CD4-positive, alpha-beta memory T cell (primary cell): ENCODE measurements at regions of chr16 and their contacts with region 1.

Region 1: DNA sequence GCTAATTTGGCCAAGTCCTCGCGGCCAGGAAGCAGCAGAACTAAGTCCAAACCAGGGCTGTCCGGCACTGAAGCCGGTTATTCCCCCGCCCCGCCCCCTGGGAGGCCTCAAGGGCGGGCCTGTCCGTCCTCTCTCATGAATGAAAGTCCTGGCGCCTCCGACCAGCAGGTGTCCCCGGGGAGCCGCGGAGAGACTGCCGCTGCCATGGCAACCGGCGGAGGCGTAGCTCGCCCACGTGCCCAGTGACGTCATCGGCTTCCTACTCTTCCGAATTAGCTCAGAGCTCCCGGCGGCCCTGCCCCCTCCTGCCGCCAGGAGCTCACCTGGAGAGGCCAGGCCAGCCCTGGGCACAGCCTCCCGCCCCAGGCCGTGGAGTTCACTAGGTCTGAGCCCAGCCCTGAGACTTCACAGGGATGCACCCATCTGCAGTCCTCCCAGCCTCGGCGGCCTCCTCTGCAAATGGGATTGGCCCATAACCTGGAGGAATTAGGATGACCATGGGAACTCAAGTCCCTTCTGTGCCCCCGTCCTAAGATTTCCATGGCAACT is 1.3 kb downstream of the SPATA2L start:
- DNase-seq: peak; percentile 92 to 97 (median 93)
- H3K4me3 ChIP-seq: peak overlapping the region; percentile 34 to 64
- H3K4me3 Mint-ChIP-seq: peak overlapping the region; percentile 51 to 87 (median 70)
- H3K27ac ChIP-seq: peak overlapping the region; percentile 80
- H3K27ac Mint-ChIP-seq: peak overlapping the region; percentile 83 to 94 (median 92)
- H3K4me1 ChIP-seq: peaks cover 34% of the 10 kb centered on the region
- H3K4me1 Mint-ChIP-seq: peaks cover 8 to 42% (median 16%) of the 10 kb centered on the region in 4 donors
- H3K27me3 ChIP-seq: no peaks in the 10 kb centered on the region
- H3K27me3 Mint-ChIP-seq: no peaks in the 10 kb centered on the region

Region 2: GRCh38 chr16:89269805-89270665 is 430.1 kb before region 1 on chr16:
- CTCF ChIA-PET with region 1: no interaction called
- POLR2A ChIA-PET with region 1: no interaction called
- intact Hi-C with region 1: no loop called
- DNase-seq: no peak
- H3K4me3 ChIP-seq: no peak overlapping the region
- H3K4me3 Mint-ChIP-seq: no peak overlapping the region
- H3K27ac ChIP-seq: no peak overlapping the region
- H3K27ac Mint-ChIP-seq: peak overlapping the region in 1 of 7 donors; percentile 38
- H3K4me1 ChIP-seq: no peaks in the 10 kb centered on the region
- H3K4me1 Mint-ChIP-seq: peaks cover 0 to 4% (median 0%) of the 10 kb centered on the region in 4 donors
- H3K27me3 ChIP-seq: no peaks in the 10 kb centered on the region
- H3K27me3 Mint-ChIP-seq: no peaks in the 10 kb centered on the region

Region 3: DNA sequence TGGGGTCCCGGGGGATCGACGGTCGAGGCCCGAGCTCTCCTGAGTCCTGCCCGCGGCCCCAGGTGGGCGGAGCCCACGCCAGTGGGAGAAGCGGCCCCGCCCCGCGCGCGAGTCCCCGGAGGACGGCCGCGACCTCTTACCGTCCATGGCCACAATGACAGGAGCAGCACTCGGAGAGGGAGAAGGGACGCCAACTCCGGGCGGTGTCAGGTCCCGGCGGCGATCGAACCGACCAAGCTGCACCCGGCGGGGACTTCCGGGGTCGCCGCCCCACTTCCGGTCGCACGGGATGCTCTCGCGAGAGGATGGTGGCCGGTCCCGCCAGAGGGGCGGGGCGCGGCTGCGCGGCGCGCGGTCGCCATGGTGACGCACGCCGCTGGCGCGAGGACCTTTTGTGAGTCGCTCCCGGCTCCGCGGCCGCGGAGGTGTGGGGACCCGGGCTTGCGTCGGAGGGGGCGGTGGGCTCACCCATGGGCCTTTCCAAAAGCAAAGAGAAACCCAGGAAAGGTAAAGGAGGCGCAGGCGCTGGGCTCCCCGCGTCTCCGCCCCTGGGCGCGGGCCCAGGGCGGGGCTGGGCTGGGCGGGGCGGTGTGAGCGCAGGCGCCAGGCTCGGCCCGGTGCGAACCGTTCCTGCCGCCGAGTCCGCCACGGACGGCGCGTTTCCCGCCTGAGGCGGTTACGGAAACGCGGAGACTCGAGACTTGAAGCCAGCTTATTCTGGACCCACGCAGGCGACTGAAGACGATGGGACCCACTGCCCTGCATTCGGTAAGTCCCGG is 42.5 kb before region 1 on chr16 and contains the starts of genes CHMP1A and SPATA33:
- CTCF ChIA-PET with region 1: interaction called, 10 read pairs
- POLR2A ChIA-PET with region 1: interaction called, 11 read pairs
- intact Hi-C with region 1: loop called (anchors 1 kb)
- DNase-seq: peak; percentile 90 to 97 (median 94)
- H3K4me3 ChIP-seq: peak within 1 kb of the TSS; percentile 30 to 92
- H3K4me3 Mint-ChIP-seq: peak within 1 kb of the TSS; percentile 85 to 91 (median 88)
- H3K27ac ChIP-seq: peak within 1 kb of the TSS; percentile 93
- H3K27ac Mint-ChIP-seq: peak within 1 kb of the TSS; percentile 85 to 92 (median 91)
- H3K4me1 ChIP-seq: peaks cover 21% of the 10 kb centered on the region
- H3K4me1 Mint-ChIP-seq: peaks cover 13 to 46% (median 26%) of the 10 kb centered on the region in 4 donors
- H3K27me3 ChIP-seq: no peaks in the 10 kb centered on the region
- H3K27me3 Mint-ChIP-seq: no peaks in the 10 kb centered on the region
- total RNA-seq, gene CHMP1A: 77.3 to 88.9 TPM
- total RNA-seq, gene SPATA33: 8.6 to 10.5 TPM

Region 4: DNA sequence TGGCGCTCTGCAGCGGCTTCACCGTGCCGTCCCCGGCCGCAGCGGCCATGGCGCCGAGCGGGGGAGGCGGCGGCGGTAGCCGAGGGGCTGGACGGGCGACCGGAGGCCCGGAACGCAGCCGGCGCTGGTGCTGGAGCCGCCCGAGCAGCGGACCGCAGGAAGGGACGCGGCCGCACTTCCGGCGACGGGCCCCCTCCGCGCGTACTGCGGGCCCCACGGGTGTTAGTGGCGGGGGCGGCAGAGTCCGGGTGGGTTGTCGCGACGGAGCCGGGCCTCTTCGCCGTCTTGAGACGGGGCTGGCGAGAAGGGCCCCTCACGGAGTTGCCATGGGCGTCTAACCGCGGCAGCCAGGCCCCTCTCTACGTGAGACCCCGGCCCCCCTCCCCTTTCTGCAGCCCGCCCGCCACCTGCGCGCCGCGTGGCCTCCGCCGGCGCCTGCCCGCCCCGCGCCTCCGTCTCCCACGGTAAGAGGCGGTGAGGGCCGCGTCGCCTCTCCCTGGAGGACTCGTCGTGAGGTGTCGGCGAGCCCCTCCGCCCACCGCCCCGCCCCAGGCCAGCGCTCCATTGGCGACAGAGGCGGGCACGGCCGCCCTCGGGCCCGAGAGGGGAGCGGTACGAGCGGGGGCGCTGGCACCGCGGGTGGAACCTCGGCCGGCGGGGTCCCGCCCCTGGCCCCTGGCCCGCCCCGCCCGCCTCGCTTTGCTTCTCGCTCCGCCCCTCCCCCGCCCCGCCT is 20.8 kb after region 1 on chr16 and contains the starts of genes VPS9D1 and ZNF276:
- CTCF ChIA-PET with region 1: interaction called, 25 read pairs
- POLR2A ChIA-PET with region 1: interaction called, 59 read pairs
- intact Hi-C with region 1: loop called (anchors 1 kb)
- DNase-seq: peak; percentile 81 to 84 (median 81)
- H3K4me3 ChIP-seq: peak within 1 kb of the TSS; percentile 78 to 96
- H3K4me3 Mint-ChIP-seq: peak within 1 kb of the TSS; percentile 92 to 99 (median 99)
- H3K27ac ChIP-seq: peak within 1 kb of the TSS; percentile 89
- H3K27ac Mint-ChIP-seq: peak within 1 kb of the TSS; percentile 97 to 100 (median 99)
- H3K4me1 ChIP-seq: peaks cover 48% of the 10 kb centered on the region
- H3K4me1 Mint-ChIP-seq: peaks cover 13 to 35% (median 25%) of the 10 kb centered on the region in 4 donors
- H3K27me3 ChIP-seq: no peaks in the 10 kb centered on the region
- H3K27me3 Mint-ChIP-seq: no peaks in the 10 kb centered on the region
- total RNA-seq, gene VPS9D1: 13.0 to 13.6 TPM
- total RNA-seq, gene ZNF276: 141 to 143 TPM

Region 5: GRCh38 chr16:89785523-89786155 is 85.5 kb after region 1 on chr16:
- CTCF ChIA-PET with region 1: interaction called, 293 read pairs
- POLR2A ChIA-PET with region 1: interaction called, 5 read pairs
- intact Hi-C with region 1: no loop called
- DNase-seq: peak; percentile 68 to 83 (median 71)
- H3K4me3 ChIP-seq: no peak overlapping the region
- H3K4me3 Mint-ChIP-seq: peak overlapping the region in 7 of 8 donors; percentile 13 to 82 (median 67)
- H3K27ac ChIP-seq: no peak overlapping the region
- H3K27ac Mint-ChIP-seq: peak overlapping the region; percentile 43 to 95 (median 77)
- H3K4me1 ChIP-seq: peaks cover 33% of the 10 kb centered on the region
- H3K4me1 Mint-ChIP-seq: peaks cover 24 to 42% (median 29%) of the 10 kb centered on the region in 4 donors
- H3K27me3 ChIP-seq: no peaks in the 10 kb centered on the region
- H3K27me3 Mint-ChIP-seq: no peaks in the 10 kb centered on the region

Region 6: GRCh38 chr16:89860747-89861304 is 160.7 kb after region 1 on chr16:
- CTCF ChIA-PET with region 1: interaction called, 138 read pairs
- POLR2A ChIA-PET with region 1: interaction called, 21 read pairs
- intact Hi-C with region 1: loop called (anchors 1 kb)
- DNase-seq: peak; percentile 71 to 80 (median 74)
- H3K4me3 ChIP-seq: no peak overlapping the region
- H3K4me3 Mint-ChIP-seq: peak overlapping the region in 2 of 8 donors; percentile 30 to 39
- H3K27ac ChIP-seq: no peak overlapping the region
- H3K27ac Mint-ChIP-seq: peak overlapping the region in 5 of 7 donors; percentile 44 to 85 (median 80)
- H3K4me1 ChIP-seq: peaks cover 41% of the 10 kb centered on the region
- H3K4me1 Mint-ChIP-seq: peaks cover 27 to 42% (median 34%) of the 10 kb centered on the region in 4 donors
- H3K27me3 ChIP-seq: no peaks in the 10 kb centered on the region
- H3K27me3 Mint-ChIP-seq: no peaks in the 10 kb centered on the region

Region 7: GRCh38 chr16:89898201-89898967 is 198.2 kb after region 1 on chr16:
- CTCF ChIA-PET with region 1: no interaction called
- POLR2A ChIA-PET with region 1: no interaction called
- intact Hi-C with region 1: no loop called
- DNase-seq: no peak
- H3K4me3 ChIP-seq: no peak overlapping the region
- H3K4me3 Mint-ChIP-seq: no peak overlapping the region
- H3K27ac ChIP-seq: no peak overlapping the region
- H3K27ac Mint-ChIP-seq: peak overlapping the region in 3 of 7 donors; percentile 18 to 69 (median 29)
- H3K4me1 ChIP-seq: no peaks in the 10 kb centered on the region
- H3K4me1 Mint-ChIP-seq: no peaks in the 10 kb centered on the region
- H3K27me3 ChIP-seq: no peaks in the 10 kb centered on the region
- H3K27me3 Mint-ChIP-seq: no peaks in the 10 kb centered on the region

Region 8: DNA sequence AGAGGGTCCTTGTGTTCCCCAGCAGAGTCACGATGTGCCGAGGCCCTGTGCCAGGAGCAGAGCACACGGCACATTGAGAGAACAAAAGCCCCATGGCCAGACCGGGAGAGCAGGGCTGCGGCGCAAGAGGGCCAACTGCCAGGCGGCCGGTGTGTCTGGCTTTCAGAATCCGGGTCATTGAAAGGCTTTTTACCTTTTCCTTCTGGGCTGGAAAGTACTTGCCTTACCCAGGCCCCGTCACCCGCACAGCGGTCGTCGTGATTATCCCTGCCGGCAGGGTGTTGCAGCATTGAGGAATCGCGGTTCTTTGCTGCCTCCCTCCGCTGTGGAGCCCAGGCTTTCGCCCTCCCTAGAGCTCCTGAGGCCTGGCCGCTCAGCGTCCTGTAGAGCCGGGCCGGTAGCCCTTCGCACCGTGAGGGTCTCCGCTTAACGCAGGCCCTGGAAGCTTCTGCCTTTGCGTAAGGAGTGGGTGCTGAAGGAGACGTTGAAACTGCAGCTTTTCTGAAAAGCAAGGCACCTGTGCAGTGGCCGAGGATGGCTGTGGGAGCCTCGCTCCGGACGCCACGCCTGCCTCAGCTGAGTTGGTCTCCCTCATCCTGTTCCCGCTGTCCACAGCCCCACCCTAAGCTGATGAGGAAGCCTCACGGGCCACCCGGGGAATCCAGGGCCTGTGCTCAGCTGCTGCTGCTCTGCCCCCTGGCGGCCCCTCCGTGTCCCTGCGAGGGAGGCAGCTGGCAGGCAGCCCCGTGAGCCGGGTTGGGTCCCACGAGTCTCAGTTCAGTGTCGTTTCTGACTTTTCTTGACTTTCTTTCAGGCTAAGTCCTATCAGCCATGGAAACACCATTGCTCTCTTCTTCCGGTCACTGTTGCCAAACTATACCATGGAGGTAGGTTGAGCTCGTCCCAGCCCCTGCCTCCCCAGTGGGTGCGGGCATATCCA is 209.9 kb after region 1 on chr16:
- CTCF ChIA-PET with region 1: interaction called, 33 read pairs
- POLR2A ChIA-PET with region 1: interaction called, 9 read pairs
- intact Hi-C with region 1: loop called (anchors 1 kb)
- DNase-seq: peak; percentile 61 to 73 (median 65)
- H3K4me3 ChIP-seq: no peak overlapping the region
- H3K4me3 Mint-ChIP-seq: no peak overlapping the region
- H3K27ac ChIP-seq: no peak overlapping the region
- H3K27ac Mint-ChIP-seq: peak overlapping the region in 3 of 7 donors; percentile 59 to 78 (median 73)
- H3K4me1 ChIP-seq: peaks cover 3% of the 10 kb centered on the region
- H3K4me1 Mint-ChIP-seq: peaks cover 3 to 23% (median 5%) of the 10 kb centered on the region in 4 donors
- H3K27me3 ChIP-seq: no peaks in the 10 kb centered on the region
- H3K27me3 Mint-ChIP-seq: no peaks in the 10 kb centered on the region